WTC11 (cell line): ENCODE measurements at regions of chr3 and their contacts with region 1.

Region 1: DNA sequence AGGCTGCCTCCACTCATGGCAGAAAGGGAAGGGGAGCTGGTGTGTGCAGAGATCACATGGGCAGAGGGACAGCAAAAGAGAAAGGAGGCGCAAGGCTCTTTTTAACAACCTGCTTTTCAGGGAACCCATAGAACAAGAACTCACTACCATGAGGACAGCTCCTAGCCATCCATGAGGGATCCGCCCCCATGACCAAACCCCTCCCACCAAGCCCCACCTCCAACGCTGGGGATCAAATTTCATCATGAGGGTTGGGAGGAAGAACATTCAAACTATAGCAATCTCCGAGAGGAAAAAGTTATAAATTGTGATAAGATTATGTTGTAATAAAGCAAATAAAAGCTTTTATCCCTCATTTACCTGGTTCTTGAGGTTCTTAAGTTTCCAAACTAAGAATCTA is 84.7 kb upstream of the LMCD1 start:
- DNase-seq: peak; percentile 18
- ATAC-seq: peak; percentile 81
- H3K4me3 Mint-ChIP-seq: no peak overlapping the region
- H3K27ac Mint-ChIP-seq: no peak overlapping the region
- H3K4me1 Mint-ChIP-seq: 0 out of 2 replicates have a peak, but pooled peaks cover 4% of the 10 kb centered on the region
- H3K27me3 Mint-ChIP-seq: no peaks in the 10 kb centered on the region
- CTCF ChIP-seq: no peak

Region 2: DNA sequence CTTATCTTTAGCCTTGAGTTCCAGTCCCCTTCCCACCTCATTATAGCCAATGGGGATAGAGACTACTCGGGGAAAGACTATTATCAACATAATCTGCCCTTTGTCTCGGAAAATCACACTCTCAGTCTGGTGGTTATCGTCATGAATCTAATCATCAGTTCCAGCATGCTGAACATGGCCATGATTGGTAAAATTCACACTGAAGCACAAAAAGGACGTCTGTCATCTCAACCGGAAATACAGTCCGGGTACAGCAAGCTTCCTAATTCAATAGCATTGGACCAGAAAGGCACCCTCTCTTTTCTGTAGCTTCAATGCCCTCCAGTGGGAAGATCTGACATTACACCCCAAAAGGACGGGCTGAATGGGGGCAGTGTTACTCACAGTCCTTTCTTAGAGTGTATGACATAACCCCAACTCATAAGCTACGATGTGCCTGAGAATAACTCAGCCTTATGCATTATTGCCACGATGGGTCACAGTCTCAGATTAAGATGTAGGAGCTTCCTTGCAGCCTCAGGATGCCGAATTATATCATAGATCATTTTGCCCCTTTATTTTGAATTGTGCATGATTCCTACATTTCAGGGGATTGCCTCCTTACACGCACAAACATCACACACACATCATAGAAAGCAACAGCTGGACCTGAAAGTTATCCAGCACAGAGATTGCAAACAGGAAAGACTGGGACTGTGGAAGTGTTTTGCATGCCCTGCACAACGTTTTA is 305.7 kb before region 1 on chr3:
- CTCF ChIA-PET with region 1: interaction called, 10 read pairs
- POLR2A ChIA-PET with region 1: no interaction called
- DNase-seq: peak; percentile 78
- ATAC-seq: peak; percentile 90
- H3K4me3 Mint-ChIP-seq: no peak overlapping the region
- H3K27ac Mint-ChIP-seq: no peak overlapping the region
- H3K4me1 Mint-ChIP-seq: peaks cover 36% of the 10 kb centered on the region
- H3K27me3 Mint-ChIP-seq: no peaks in the 10 kb centered on the region
- CTCF ChIP-seq: peak; percentile 72

Region 3: DNA sequence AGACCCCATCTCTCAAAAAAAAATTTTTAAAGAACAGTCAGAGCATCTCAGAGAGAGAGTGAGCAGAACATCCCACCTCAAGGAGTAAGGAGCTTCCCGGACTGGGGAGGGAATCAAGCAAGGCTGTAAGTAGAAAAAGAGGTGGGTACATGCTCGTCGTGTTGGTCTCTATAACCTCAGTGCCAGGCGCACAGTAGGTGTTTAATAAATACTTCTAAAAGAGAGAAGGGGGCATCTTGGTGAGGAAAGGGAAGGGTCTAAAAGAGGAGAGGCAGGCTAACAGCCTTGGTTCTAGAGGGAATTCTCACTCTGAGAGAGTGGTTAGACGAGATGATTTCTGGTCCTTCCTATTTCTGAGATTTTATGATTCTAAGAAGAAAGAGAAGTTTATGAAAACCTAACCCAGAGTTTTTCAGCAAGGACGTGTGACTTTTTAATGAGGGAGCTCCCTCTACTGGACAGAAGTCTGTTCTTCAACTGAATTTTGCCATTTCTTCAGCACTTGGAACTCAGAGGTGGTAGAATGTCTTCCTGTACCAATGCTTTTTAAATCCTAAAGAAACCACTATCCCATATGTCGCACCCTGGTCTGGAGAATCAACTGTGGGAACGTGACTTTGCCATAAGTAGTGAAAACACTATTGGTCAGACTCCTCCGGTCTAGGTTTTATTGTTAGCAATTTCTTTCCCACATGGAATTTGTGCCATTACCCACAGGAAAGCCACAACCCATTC is 115.1 kb before region 1 on chr3:
- CTCF ChIA-PET with region 1: interaction called, 10 read pairs
- POLR2A ChIA-PET with region 1: no interaction called
- DNase-seq: no peak
- ATAC-seq: peak; percentile 63
- H3K4me3 Mint-ChIP-seq: no peak overlapping the region
- H3K27ac Mint-ChIP-seq: no peak overlapping the region
- H3K4me1 Mint-ChIP-seq: peaks cover 15% of the 10 kb centered on the region
- H3K27me3 Mint-ChIP-seq: no peaks in the 10 kb centered on the region; the same call in 1 of the 2 replicates
- CTCF ChIP-seq: 0 out of 2 replicates have a peak, but pooled peaks have one; percentile 46

Region 4: DNA sequence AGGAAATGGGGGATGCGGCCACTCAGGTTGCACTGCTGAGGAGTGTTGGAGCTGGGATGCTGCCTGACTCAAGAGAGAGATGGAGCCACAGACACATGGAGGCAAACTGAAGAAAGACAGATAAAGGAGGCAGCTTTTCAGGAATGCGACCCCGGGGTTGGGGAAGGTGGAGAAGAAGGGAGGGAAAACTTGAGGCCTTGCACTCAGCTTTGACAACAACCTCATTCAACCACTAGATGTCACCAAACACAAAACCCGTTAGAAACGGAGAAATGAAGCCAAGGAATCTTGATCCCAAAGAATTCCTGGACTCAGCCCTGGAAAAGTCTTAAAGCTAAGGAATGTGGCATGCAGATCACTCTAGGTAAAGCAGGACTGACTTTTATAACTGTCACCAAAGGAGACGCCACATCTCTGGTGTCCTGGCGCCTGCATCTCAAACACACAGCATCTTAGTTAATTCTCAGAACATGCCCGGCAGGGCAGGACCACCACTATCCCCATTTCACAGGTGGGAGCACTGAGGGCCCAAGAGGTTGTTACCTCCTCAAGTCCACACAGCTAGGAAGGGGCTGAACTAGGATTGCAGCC is 25.1 kb after region 1 on chr3:
- CTCF ChIA-PET with region 1: interaction called, 14 read pairs
- POLR2A ChIA-PET with region 1: no interaction called
- DNase-seq: peak; percentile 39
- ATAC-seq: peak; percentile 78
- H3K4me3 Mint-ChIP-seq: no peak overlapping the region
- H3K27ac Mint-ChIP-seq: no peak overlapping the region
- H3K4me1 Mint-ChIP-seq: no peaks in the 10 kb centered on the region
- H3K27me3 Mint-ChIP-seq: peaks cover 5% of the 10 kb centered on the region; the same call in 1 of the 2 replicates
- CTCF ChIP-seq: peak; percentile 23; the same call in 1 of the 2 replicates